HAP-1 (cell line): ENCODE measurements at regions of chr4 and their contacts with region 1.

Region 1: DNA sequence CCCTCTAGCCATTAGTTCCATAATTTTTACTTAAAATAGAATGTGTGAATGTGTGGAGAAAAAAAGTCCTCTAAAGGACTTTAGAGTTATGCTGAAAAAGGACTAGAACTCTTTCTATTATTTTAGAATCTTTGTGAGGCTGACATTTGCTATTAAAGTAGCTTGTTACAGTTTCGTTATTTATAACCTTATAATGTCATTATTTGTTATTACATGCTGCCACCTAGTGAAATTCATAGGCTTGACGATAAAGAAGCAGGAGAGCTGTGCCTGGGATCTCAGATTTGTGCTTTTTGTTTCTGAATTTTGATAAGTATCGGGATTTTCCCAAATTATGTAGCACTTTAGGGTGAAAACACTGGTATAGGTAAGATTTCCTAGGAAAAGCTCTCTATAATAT is 38.5 kb upstream of the TAPT1 start:
- DNase-seq: peak in 1 of 2 experiments; percentile 59
- H3K4me3 ChIP-seq: no peak overlapping the region
- H3K4me1 ChIP-seq: no peaks in the 10 kb centered on the region
- H3K27me3 ChIP-seq: peaks cover 25% of the 10 kb centered on the region

Region 2: GRCh38 chr4:15717011-15717451 is 547.8 kb before region 1 on chr4:
- in situ Hi-C with region 1: no loop called
- DNase-seq: no peak
- H3K4me3 ChIP-seq: no peak overlapping the region
- H3K4me1 ChIP-seq: no peaks in the 10 kb centered on the region
- H3K27me3 ChIP-seq: no peaks in the 10 kb centered on the region

Region 3: GRCh38 chr4:15794905-15795304 is 469.9 kb before region 1 on chr4:
- in situ Hi-C with region 1: no loop called
- DNase-seq: no peak
- H3K4me3 ChIP-seq: no peak overlapping the region
- H3K4me1 ChIP-seq: no peaks in the 10 kb centered on the region; the same call in 1 of the 2 replicates
- H3K27me3 ChIP-seq: peaks cover 4% of the 10 kb centered on the region; the same call in 1 of the 2 replicates

Region 4: GRCh38 chr4:16019649-16020048 is 245.1 kb before region 1 on chr4:
- in situ Hi-C with region 1: loop called (anchors 5 kb)
- DNase-seq: no peak
- H3K4me3 ChIP-seq: no peak overlapping the region
- H3K4me1 ChIP-seq: peaks cover 6% of the 10 kb centered on the region
- H3K27me3 ChIP-seq: peaks cover 16% of the 10 kb centered on the region; the same call in 1 of the 2 replicates

Region 5: GRCh38 chr4:16450724-16451123 is 185.9 kb after region 1 on chr4:
- in situ Hi-C with region 1: no loop called
- DNase-seq: no peak
- H3K4me3 ChIP-seq: no peak overlapping the region
- H3K4me1 ChIP-seq: no peaks in the 10 kb centered on the region
- H3K27me3 ChIP-seq: peaks cover 5% of the 10 kb centered on the region; the same call in 1 of the 2 replicates